ENCODE measurements at regions of chr16 and their contacts with region 1.

Region 1: GRCh38 chr16:81035398-81035974 is at the start of gene ATMIN:
- DNase-seq: peak; percentile 88 to 97 (median 93)
- H3K4me3 ChIP-seq: peak within 1 kb of the TSS; percentile 68 to 87 (median 75)
- H3K27ac ChIP-seq: no peak within 1 kb of the TSS
- H3K4me1 ChIP-seq: peaks cover 0 to 9% (median 5%) of the 10 kb centered on the region in 3 donors
- H3K27me3 ChIP-seq: no peaks in the 10 kb centered on the region
- CTCF ChIP-seq: peak; percentile 98
- total RNA-seq, gene ATMIN: 31.3 TPM

Region 2: DNA sequence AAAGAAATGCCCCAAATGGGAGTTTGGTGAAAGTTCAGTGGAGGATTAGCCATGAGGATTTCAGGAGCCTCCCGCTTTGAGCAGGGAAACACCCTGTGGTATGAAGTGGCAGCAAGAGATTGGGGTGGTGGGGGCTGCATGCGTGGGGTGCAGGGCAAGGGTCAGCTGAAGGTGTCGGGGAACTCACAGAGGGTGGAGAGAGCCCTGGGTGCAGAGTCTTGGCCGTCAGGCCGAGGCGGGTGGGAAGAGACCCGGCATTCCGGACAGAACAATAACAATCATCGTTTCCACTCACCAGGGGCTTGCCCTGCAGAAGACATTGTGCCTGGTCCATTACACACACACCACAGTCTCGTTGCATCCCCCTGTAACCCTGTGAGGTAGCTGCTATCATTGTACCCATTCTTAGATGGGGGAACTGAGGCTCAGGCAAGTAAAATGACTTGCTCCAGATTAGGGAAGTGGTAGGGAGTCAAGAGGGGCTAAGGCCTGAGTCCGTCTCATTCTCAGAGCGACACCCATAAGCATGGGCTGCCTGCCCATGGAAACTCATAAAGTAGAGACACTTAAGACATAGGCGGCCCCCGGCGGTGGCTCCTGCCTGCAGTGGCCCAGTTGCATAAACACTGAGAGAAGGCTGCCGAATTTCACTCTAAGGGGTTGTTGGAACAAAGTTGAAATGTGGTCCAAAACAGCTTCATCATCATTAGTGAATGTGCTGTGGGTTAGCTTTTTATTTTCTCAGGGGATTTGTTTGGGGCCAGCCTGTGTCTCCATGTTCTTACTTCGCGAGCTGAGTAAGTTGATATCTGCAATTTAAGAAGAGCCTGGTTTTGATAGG is 502.5 kb after region 1 on chr16:
- intact Hi-C with region 1: no loop called
- DNase-seq: peak in 2 of 5 donors; percentile 74 to 80
- H3K4me3 ChIP-seq: no peak overlapping the region
- H3K27ac ChIP-seq: no peak overlapping the region
- H3K4me1 ChIP-seq: peaks cover 0 to 37% (median 30%) of the 10 kb centered on the region in 3 donors
- H3K27me3 ChIP-seq: no peaks in the 10 kb centered on the region
- CTCF ChIP-seq: no peak

Region 3: GRCh38 chr16:81745704-81746558 is 710.4 kb after region 1 on chr16:
- intact Hi-C with region 1: loop called (anchors 10 kb)
- DNase-seq: peak; percentile 78 to 88 (median 83)
- H3K4me3 ChIP-seq: peak overlapping the region; percentile 51 to 61 (median 59)
- H3K27ac ChIP-seq: no peak overlapping the region
- H3K4me1 ChIP-seq: peaks cover 0 to 5% (median 0%) of the 10 kb centered on the region in 3 donors
- H3K27me3 ChIP-seq: no peaks in the 10 kb centered on the region
- CTCF ChIP-seq: no peak

Measured in kidney (tissue), 22 donors.